PC-3 (cell line): ENCODE measurements at regions of chrX and their contacts with region 1.

Region 1: DNA sequence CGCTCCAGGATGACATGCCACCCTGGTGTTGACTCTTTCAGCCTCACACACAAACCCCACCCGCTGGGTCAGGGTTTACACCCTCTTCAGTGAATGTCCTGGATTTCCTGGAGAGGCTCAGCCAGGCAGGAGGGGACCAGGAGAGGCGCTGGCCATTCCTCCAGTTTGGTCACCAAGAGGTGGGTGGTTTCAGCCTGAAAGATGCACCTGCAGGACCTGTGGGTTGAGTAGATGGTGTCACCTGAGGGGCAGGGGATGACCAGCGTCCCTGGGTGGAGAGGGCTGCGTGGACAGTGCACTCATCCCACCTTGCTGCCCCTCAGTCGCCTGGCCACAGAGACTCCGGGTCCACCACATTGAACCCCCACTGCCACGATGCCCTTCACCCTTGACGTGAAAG is 179.7 kb downstream of the ASMT start:
- DNase-seq: no peak
- ATAC-seq: no peak
- H3K4me3 ChIP-seq: no peak overlapping the region
- H3K27ac ChIP-seq: no peak overlapping the region
- H3K4me1 ChIP-seq: peaks cover 7% of the 10 kb centered on the region
- H3K27me3 ChIP-seq: no peaks in the 10 kb centered on the region
- CTCF ChIP-seq: no peak

Region 2: GRCh38 chrX:1778817-1779216 is 15.8 kb before region 1 on chrX:
- CTCF ChIA-PET with region 1: no interaction called
- POLR2A ChIA-PET with region 1: no interaction called
- intact Hi-C with region 1: loop called (anchors 2 kb)
- DNase-seq: peak; percentile 82
- ATAC-seq: peak; percentile 91
- H3K4me3 ChIP-seq: peak overlapping the region; percentile 30; the same call in 1 of the 2 replicates
- H3K27ac ChIP-seq: peak overlapping the region; percentile 61
- H3K4me1 ChIP-seq: peaks cover 22% of the 10 kb centered on the region
- H3K27me3 ChIP-seq: no peaks in the 10 kb centered on the region; the same call in 1 of the 2 replicates
- CTCF ChIP-seq: no peak